Activated CD4-positive, alpha-beta memory T cell treated with anti-CD3 and anti-CD28 coated beads, Interleukin-2, amount 10 ng/mL, durations not matched to agents 7 days and 5 days (primary cell): ENCODE measurements at regions of chr3 and their contacts with region 1.

Region 1: GRCh38 chr3:171772427-171773056 is 37.7 kb downstream of the PLD1 start:
- DNase-seq: peak; percentile 49
- H3K4me3 Mint-ChIP-seq: no peak overlapping the region
- H3K27ac Mint-ChIP-seq: no peak overlapping the region
- H3K4me1 Mint-ChIP-seq: peaks cover 2% of the 10 kb centered on the region
- H3K27me3 Mint-ChIP-seq: peaks cover 9% of the 10 kb centered on the region

Region 2: GRCh38 chr3:170961616-170962400 is 810.7 kb before region 1 on chr3:
- CTCF ChIA-PET with region 1: interaction called, 18 read pairs
- POLR2A ChIA-PET with region 1: no interaction called
- DNase-seq: no peak
- H3K4me3 Mint-ChIP-seq: no peak overlapping the region
- H3K27ac Mint-ChIP-seq: no peak overlapping the region
- H3K4me1 Mint-ChIP-seq: no peaks in the 10 kb centered on the region
- H3K27me3 Mint-ChIP-seq: peaks cover under 1% of the 10 kb centered on the region

Region 3: GRCh38 chr3:171606151-171606751 is 166.3 kb before region 1 on chr3:
- CTCF ChIA-PET with region 1: no interaction called
- POLR2A ChIA-PET with region 1: no interaction called
- DNase-seq: no peak
- H3K4me3 Mint-ChIP-seq: no peak overlapping the region
- H3K27ac Mint-ChIP-seq: no peak overlapping the region
- H3K4me1 Mint-ChIP-seq: no peaks in the 10 kb centered on the region
- H3K27me3 Mint-ChIP-seq: peaks cover 3% of the 10 kb centered on the region

Region 4: GRCh38 chr3:171646357-171647133 is 126.0 kb before region 1 on chr3:
- CTCF ChIA-PET with region 1: interaction called, 21 read pairs
- POLR2A ChIA-PET with region 1: no interaction called
- DNase-seq: no peak
- H3K4me3 Mint-ChIP-seq: no peak overlapping the region
- H3K27ac Mint-ChIP-seq: no peak overlapping the region
- H3K4me1 Mint-ChIP-seq: no peaks in the 10 kb centered on the region
- H3K27me3 Mint-ChIP-seq: no peaks in the 10 kb centered on the region

Region 5: GRCh38 chr3:171678971-171679492 is 93.5 kb before region 1 on chr3:
- CTCF ChIA-PET with region 1: no interaction called
- POLR2A ChIA-PET with region 1: no interaction called
- DNase-seq: no peak
- H3K4me3 Mint-ChIP-seq: no peak overlapping the region
- H3K27ac Mint-ChIP-seq: no peak overlapping the region
- H3K4me1 Mint-ChIP-seq: no peaks in the 10 kb centered on the region
- H3K27me3 Mint-ChIP-seq: peaks cover 18% of the 10 kb centered on the region

Region 6: GRCh38 chr3:172270557-172271166 is 498.1 kb after region 1 on chr3:
- CTCF ChIA-PET with region 1: no interaction called
- POLR2A ChIA-PET with region 1: no interaction called
- DNase-seq: no peak
- H3K4me3 Mint-ChIP-seq: no peak overlapping the region
- H3K27ac Mint-ChIP-seq: no peak overlapping the region
- H3K4me1 Mint-ChIP-seq: no peaks in the 10 kb centered on the region
- H3K27me3 Mint-ChIP-seq: no peaks in the 10 kb centered on the region